ENCODE measurements at regions of chr6 and their contacts with region 1.

Region 1: DNA sequence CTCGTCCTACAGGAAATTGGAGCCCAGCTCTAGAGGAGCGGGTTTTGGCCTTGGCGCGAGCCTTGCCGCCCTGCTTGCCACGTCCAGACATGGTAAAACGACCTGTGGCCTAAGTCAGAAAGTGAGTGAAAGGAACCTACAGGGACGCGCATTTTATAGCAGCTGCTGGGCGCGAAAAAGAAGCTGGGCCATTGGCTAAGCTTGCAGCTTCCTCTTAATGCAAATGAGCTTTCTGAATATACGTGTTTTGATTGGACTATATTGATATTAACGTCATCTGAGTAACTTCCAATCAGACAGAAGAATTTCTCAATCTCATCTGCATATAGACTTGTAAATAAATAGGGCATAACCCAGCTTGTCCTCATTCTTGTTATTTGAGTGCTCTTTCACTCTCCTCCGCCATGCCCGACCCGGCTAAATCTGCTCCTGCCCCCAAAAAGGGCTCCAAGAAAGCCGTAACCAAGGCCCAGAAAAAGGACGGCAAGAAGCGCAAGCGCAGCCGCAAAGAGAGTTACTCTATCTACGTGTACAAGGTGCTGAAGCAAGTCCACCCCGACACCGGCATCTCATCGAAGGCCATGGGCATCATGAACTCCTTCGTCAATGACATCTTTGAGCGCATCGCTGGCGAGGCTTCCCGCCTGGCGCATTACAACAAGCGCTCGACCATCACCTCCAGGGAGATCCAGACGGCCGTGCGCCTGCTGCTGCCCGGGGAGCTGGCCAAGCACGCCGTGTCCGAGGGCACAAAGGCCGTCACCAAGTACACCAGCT is 18.9 kb downstream of the OR2B2 start:
- DNase-seq: peak; percentile 99
- ATAC-seq: peak; percentile 52
- H3K4me3 ChIP-seq: peak overlapping the region; percentile 74 to 76
- H3K27ac ChIP-seq: peak overlapping the region; percentile 98
- H3K4me1 ChIP-seq: peaks cover 20 to 60% of the 10 kb centered on the region in 2 experiments
- H3K27me3 ChIP-seq: no peaks in the 10 kb centered on the region
- CTCF ChIP-seq: no peak
- POLR2A ChIP-seq: peak; percentile 83
- RAD21 ChIP-seq: no peak

Region 2: GRCh38 chr6:26054857-26055669 is 1838.2 kb before region 1 on chr6:
- CTCF ChIA-PET with region 1: no interaction called
- POLR2A ChIA-PET with region 1: interaction called, 4 read pairs
- RAD21 ChIA-PET with region 1: no interaction called
- intact Hi-C with region 1: loop called (anchors 10 kb)
- DNase-seq: peak; percentile 98
- ATAC-seq: peak; percentile 70
- H3K4me3 ChIP-seq: peak overlapping the region; percentile 52 to 73
- H3K27ac ChIP-seq: peak overlapping the region; percentile 85
- H3K4me1 ChIP-seq: peaks cover 41 to 68% of the 10 kb centered on the region in 2 experiments
- H3K27me3 ChIP-seq: no peaks in the 10 kb centered on the region
- CTCF ChIP-seq: 0 out of 6 replicates have a peak, but pooled peaks of 1 of the 3 experiments have one; percentile 5
- POLR2A ChIP-seq: no peak
- RAD21 ChIP-seq: peak; percentile 30

Region 3: DNA sequence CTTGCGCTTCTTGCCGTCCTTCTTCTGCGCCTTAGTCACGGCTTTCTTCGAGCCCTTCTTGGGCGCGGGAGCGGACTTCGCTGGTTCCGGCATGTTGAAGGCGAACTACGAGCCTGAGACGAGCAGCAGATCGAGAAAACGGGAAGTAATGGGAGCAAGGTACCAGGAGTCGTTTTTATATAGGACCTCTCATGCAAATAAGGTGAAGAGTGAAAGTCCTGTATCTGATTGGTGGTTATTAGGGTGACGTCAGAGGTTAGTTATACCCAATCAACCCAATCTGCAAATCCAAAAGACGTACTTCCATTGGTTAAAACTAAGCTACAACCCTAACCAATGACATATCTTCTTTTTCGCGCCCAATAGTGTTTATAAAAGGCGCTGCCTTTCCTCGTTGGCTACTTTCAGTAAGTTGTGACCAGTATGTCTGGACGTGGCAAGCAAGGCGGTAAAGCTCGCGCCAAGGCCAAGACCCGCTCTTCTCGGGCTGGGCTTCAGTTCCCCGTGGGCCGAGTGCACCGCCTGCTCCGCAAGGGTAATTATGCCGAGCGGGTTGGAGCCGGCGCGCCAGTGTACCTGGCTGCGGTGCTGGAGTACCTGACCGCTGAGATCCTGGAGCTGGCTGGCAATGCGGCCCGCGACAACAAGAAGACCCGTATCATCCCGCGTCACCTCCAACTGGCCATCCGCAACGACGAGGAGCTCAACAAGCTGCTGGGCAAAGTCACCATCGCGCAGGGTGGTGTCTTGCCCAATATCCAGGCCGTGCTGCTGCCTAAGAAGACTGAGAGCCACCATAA is 746.3 kb before region 1 on chr6:
- CTCF ChIA-PET with region 1: no interaction called
- POLR2A ChIA-PET with region 1: interaction called, 89 read pairs
- RAD21 ChIA-PET with region 1: no interaction called
- intact Hi-C with region 1: loop called (anchors 5 kb)
- DNase-seq: peak; percentile 99
- ATAC-seq: peak; percentile 71
- H3K4me3 ChIP-seq: peak overlapping the region; percentile 69 to 70
- H3K27ac ChIP-seq: peak overlapping the region; percentile 97
- H3K4me1 ChIP-seq: peaks cover 26 to 55% of the 10 kb centered on the region in 2 experiments
- H3K27me3 ChIP-seq: no peaks in the 10 kb centered on the region
- CTCF ChIP-seq: no peak
- POLR2A ChIP-seq: peak; percentile 93
- RAD21 ChIP-seq: no peak

Region 4: DNA sequence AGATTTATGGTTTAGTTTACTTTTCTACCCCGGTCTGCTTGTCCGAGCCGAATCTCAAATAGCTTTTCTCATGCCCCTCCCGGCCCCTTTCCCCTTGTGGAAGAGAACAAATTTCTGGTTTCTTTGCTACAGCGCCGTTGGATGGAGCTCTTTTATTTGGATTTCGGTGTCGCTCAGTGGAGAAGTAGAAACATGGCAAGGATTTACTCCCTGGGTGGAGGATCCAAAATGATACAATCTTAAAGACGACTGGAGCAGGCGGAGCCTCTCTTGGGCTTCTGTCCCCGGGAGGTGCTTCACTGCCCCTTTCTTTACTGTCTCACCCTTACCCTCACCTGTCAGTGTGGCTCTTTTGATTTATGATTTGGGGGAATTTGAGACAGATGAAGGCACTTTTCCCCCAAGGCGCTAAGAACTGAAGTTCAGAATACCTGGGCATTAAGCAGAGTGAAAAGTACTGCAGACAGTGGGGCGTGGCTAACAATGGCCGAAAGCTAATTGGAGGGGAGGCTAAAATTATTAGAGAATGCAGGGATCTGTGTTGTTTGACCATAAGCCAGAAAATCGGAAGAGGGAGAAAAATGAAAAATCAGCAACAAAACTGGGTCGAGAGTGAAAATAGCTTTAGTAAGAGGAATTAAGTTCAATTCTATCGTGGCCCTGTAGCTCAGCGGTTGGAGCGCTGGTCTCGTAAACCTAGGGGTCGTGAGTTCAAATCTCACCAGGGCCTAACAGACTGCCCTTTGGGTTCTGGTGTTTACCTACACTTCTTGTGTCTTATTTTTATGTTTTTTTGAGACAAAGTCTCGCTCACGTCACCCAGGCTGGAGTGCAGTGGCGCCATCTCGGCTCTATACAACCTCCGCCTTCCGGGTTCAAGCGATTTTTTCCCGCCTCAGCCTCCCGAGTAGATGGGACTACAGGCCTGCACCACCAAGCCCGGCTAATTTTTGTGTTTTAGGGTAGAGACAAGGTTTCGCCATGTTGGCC is 275.3 kb before region 1 on chr6:
- CTCF ChIA-PET with region 1: no interaction called
- POLR2A ChIA-PET with region 1: no interaction called
- RAD21 ChIA-PET with region 1: interaction called in 1 of 2 experiments, 3 read pairs
- intact Hi-C with region 1: loop called (anchors 10 kb)
- DNase-seq: peak; percentile 62
- ATAC-seq: peak; percentile 86
- H3K4me3 ChIP-seq: peak overlapping the region; percentile 45 to 60
- H3K27ac ChIP-seq: peak overlapping the region; percentile 51
- H3K4me1 ChIP-seq: peaks cover 4 to 19% of the 10 kb centered on the region in 2 experiments; a peak in 2 of 4 replicates
- H3K27me3 ChIP-seq: no peaks in the 10 kb centered on the region
- CTCF ChIP-seq: peak in 2 of 3 experiments; percentile 14 to 21; a peak in 1 of 6 replicates
- POLR2A ChIP-seq: no peak
- RAD21 ChIP-seq: peak; percentile 48

Region 5: GRCh38 chr6:27795697-27796494 is 97.4 kb before region 1 on chr6:
- CTCF ChIA-PET with region 1: interaction called, 13 read pairs
- POLR2A ChIA-PET with region 1: interaction called, 26 read pairs
- RAD21 ChIA-PET with region 1: no interaction called
- intact Hi-C with region 1: no loop called
- DNase-seq: peak; percentile 90
- ATAC-seq: peak; percentile 46
- H3K4me3 ChIP-seq: no peak overlapping the region
- H3K27ac ChIP-seq: peak overlapping the region; percentile 26; the same call in 1 of the 2 replicates
- H3K4me1 ChIP-seq: peaks cover 13 to 32% of the 10 kb centered on the region in 2 experiments
- H3K27me3 ChIP-seq: no peaks in the 10 kb centered on the region
- CTCF ChIP-seq: peak; percentile 75 to 80 (median 76); a peak in 5 of 6 replicates
- POLR2A ChIP-seq: no peak
- RAD21 ChIP-seq: peak; percentile 82

Region 6: DNA sequence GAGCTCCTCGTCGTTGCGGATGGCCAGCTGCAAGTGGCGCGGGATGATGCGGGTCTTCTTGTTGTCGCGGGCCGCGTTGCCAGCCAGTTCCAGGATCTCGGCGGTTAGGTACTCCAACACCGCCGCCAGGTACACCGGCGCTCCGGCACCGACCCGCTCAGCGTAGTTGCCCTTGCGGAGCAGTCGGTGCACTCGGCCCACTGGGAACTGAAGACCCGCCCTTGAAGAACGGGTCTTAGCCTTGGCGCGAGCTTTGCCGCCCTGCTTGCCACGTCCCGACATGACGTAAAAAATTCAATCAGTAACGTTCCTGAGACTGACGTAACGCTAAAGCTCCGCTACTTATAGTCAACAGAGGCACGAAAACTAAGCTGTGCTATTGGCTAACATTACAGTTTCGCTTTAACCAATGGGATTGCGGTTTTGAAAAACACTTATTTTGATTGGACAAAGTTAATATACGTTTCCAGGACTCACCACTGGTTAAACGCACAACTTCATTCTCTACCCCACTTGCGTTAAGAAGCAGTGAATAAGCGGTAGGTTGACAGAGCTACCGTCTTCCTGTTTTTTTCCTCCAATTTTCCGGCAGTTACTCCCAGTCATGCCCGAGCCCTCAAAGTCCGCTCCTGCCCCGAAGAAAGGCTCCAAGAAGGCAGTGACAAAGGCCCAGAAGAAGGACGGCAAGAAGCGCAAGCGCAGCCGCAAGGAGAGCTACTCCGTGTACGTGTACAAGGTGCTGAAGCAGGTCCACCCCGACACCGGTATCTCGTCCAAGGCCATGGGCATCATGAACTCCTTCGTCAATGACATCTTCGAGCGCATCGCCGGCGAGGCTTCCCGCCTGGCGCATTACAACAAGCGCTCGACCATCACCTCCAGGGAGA is 54.9 kb before region 1 on chr6:
- CTCF ChIA-PET with region 1: interaction called, 9 read pairs
- POLR2A ChIA-PET with region 1: interaction called, 422 read pairs
- RAD21 ChIA-PET with region 1: interaction called, 3 to 18 read pairs
- intact Hi-C with region 1: loop called (anchors 1 kb)
- DNase-seq: peak; percentile 100
- ATAC-seq: peak; percentile 75
- H3K4me3 ChIP-seq: peak overlapping the region; percentile 65 to 78
- H3K27ac ChIP-seq: peak overlapping the region; percentile 98
- H3K4me1 ChIP-seq: peaks cover 23 to 36% of the 10 kb centered on the region in 2 experiments
- H3K27me3 ChIP-seq: no peaks in the 10 kb centered on the region
- CTCF ChIP-seq: no peak
- POLR2A ChIP-seq: peak; percentile 96
- RAD21 ChIP-seq: no peak

Measured in HCT116 (cell line).